PC-9 (cell line): ENCODE measurements at regions of chr1 and their contacts with region 1.

Region 1: DNA sequence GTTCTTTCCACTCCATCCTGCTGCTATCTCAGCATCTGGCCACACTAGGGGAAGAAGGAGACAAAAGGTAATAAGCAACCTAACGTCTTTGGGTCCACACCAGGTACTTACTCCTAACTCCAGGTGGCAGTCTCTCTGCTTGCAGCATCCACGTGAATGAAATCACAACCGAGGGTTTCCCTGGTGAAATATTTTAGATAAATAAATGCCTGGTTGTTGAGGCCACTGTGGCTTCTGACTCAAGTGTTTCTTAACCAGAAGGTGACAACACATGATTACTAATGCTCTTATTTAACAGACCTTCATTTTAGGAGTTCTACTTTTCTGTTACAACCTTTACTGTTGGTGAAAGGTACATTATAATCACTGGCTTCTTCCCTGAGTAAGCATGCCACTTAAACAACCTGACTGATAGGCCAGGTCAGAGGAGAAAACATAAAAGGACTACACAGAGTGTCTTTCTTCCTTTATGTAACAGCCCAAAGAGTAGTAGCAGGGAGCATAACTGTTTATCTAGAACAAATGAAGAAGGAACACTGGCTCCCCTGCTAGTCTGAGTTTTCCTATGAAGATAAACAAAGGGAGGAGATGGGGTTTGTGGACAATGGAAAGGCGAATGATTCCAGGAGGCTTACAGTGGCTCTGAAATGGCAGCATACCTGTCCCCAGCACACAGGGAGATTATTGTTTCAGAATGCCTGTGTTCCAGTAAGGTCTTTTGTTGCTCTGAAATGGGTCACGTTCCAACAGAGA is 59.9 kb downstream of the SYT6 start:
- DNase-seq: peak in 1 of 2 experiments; percentile 97
- H3K4me3 ChIP-seq: no peak overlapping the region
- H3K27ac ChIP-seq: peak overlapping the region; percentile 77
- H3K4me1 ChIP-seq: peaks cover 51% of the 10 kb centered on the region
- H3K27me3 ChIP-seq: no peaks in the 10 kb centered on the region
- CTCF ChIP-seq: peak; percentile 82

Region 2: GRCh38 chr1:114159941-114160340 is 66.1 kb after region 1 on chr1:
- CTCF ChIA-PET with region 1: no interaction called
- POLR2A ChIA-PET with region 1: no interaction called
- intact Hi-C with region 1: loop called (anchors 2 kb)
- DNase-seq: no peak
- H3K4me3 ChIP-seq: no peak overlapping the region
- H3K27ac ChIP-seq: no peak overlapping the region
- H3K4me1 ChIP-seq: no peaks in the 10 kb centered on the region
- H3K27me3 ChIP-seq: 0 out of 2 replicates have a peak, but pooled peaks cover 4% of the 10 kb centered on the region
- CTCF ChIP-seq: no peak